ENCODE measurements at regions of chr12 and their contacts with region 1.

Region 1: GRCh38 chr12:6752921-6753771 is at the start of gene MLF2:
- DNase-seq: peak; percentile 99
- H3K4me3 ChIP-seq: peak within 1 kb of the TSS; percentile 84 to 91
- H3K27ac ChIP-seq: peak within 1 kb of the TSS; percentile 97 to 98
- H3K4me1 ChIP-seq: peaks cover 14 to 18% of the 10 kb centered on the region in 2 experiments
- H3K27me3 ChIP-seq: no peaks in the 10 kb centered on the region
- CTCF ChIP-seq: no peak; the same call in 1 of the 2 replicates
- EP300 ChIP-seq: peak in 1 of 2 experiments; percentile 22; a peak in 2 of 4 replicates
- RAD21 ChIP-seq: no peak
- polyA plus RNA-seq, gene MLF2: 535 and 624 TPM in 2 replicates

Region 2: GRCh38 chr12:6507102-6507998 is 245.8 kb before region 1 on chr12:
- CTCF ChIA-PET with region 1: no interaction called
- POLR2A ChIA-PET with region 1: no interaction called
- DNase-seq: no peak
- H3K4me3 ChIP-seq: no peak overlapping the region
- H3K27ac ChIP-seq: peak overlapping the region; percentile 50 to 56
- H3K4me1 ChIP-seq: peaks cover 0 to 10% of the 10 kb centered on the region in 2 experiments; a peak in 2 of 4 replicates
- H3K27me3 ChIP-seq: no peaks in the 10 kb centered on the region
- CTCF ChIP-seq: no peak
- EP300 ChIP-seq: no peak
- RAD21 ChIP-seq: no peak

Region 3: GRCh38 chr12:6563448-6564050 is 189.6 kb before region 1 on chr12:
- CTCF ChIA-PET with region 1: no interaction called
- POLR2A ChIA-PET with region 1: no interaction called
- DNase-seq: peak; percentile 73
- H3K4me3 ChIP-seq: peak overlapping the region in 1 of 2 experiments; percentile 35; a peak in 1 of 4 replicates
- H3K27ac ChIP-seq: no peak overlapping the region
- H3K4me1 ChIP-seq: peaks cover 1 to 5% of the 10 kb centered on the region in 2 experiments; a peak in 2 of 4 replicates
- H3K27me3 ChIP-seq: no peaks in the 10 kb centered on the region
- CTCF ChIP-seq: peak; percentile 91
- EP300 ChIP-seq: no peak
- RAD21 ChIP-seq: peak; percentile 24; the same call in 1 of the 2 replicates

Region 4: DNA sequence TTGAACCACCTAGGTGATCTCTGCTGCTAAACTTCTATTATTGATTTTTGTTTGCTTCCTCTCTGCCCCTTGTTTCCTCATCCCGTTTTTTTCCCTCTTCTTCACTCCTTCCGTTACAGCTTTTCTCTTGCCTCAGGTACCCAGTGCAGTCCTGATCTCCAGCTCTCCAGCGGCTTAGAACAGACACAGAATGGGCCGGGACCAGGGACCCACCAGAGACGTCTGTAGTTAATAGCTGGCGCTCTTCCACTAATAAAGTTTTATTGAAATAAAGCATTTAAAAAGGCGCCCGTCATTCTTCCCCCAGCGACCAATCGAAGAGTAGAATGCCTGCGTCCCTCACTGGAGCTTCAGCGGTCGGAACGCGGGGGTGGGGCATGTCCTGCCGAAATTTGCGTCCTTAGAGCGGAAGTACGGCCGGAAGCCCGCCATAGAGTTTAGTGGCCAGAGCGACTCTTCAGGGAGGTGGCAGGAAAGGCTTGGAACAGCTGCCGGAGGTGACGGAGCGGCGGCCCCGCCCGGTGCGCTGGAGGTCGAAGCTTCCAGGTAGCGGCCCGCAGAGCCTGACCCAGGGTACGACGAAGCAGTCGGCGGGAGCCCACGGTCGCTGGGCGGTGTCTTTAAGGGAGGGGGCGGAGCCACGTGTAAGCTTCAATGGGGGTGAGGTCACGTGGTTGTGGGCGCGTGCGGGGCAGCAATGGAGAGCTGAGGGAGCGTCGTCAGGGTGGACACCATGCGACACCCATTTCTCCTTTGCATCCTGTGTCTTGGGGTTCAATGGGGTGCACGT is 29.3 kb before region 1 on chr12 and contains the start of gene COPS7A:
- CTCF ChIA-PET with region 1: interaction called, 20 read pairs
- POLR2A ChIA-PET with region 1: interaction called, 24 read pairs
- DNase-seq: peak; percentile 96
- H3K4me3 ChIP-seq: peak within 1 kb of the TSS; percentile 57 to 65
- H3K27ac ChIP-seq: peak within 1 kb of the TSS; percentile 84 to 87
- H3K4me1 ChIP-seq: peaks cover 0 to 9% of the 10 kb centered on the region in 2 experiments; a peak in 1 of 4 replicates
- H3K27me3 ChIP-seq: no peaks in the 10 kb centered on the region
- CTCF ChIP-seq: no peak
- EP300 ChIP-seq: no peak
- RAD21 ChIP-seq: no peak
- polyA plus RNA-seq, gene COPS7A: 191 and 231 TPM in 2 replicates

Region 5: GRCh38 chr12:6778574-6779550 is 25.7 kb after region 1 on chr12:
- CTCF ChIA-PET with region 1: interaction called, 343 read pairs
- POLR2A ChIA-PET with region 1: interaction called, 25 read pairs
- DNase-seq: peak; percentile 94
- H3K4me3 ChIP-seq: peak overlapping the region; percentile 10 to 59; a peak in 3 of 4 replicates
- H3K27ac ChIP-seq: peak overlapping the region; percentile 18 to 52; a peak in 3 of 4 replicates
- H3K4me1 ChIP-seq: peaks cover 0 to 8% of the 10 kb centered on the region in 2 experiments; a peak in 1 of 4 replicates
- H3K27me3 ChIP-seq: no peaks in the 10 kb centered on the region
- CTCF ChIP-seq: peak; percentile 91
- EP300 ChIP-seq: peak in 1 of 2 experiments; percentile 45; a peak in 1 of 4 replicates
- RAD21 ChIP-seq: peak; percentile 99

Region 6: DNA sequence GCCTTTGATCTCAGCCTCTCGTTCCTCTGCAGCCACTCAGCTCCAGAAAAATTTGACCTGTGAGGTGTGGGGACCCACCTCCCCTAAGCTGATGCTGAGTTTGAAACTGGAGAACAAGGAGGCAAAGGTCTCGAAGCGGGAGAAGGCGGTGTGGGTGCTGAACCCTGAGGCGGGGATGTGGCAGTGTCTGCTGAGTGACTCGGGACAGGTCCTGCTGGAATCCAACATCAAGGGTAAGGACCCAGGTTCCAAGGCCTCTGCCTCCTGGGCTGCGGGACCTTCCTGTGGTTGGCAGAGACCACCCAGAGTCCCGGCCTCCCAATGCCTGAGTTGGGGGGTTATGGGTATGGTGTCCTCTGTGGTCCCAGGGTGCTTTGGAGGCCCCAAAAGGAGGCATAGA is 64.0 kb after region 1 on chr12:
- CTCF ChIA-PET with region 1: interaction called, 246 read pairs
- POLR2A ChIA-PET with region 1: interaction called, 11 read pairs
- DNase-seq: no peak
- H3K4me3 ChIP-seq: no peak overlapping the region
- H3K27ac ChIP-seq: no peak overlapping the region; a peak in 1 of 4 replicates
- H3K4me1 ChIP-seq: peaks cover 8 to 57% of the 10 kb centered on the region in 2 experiments; a peak in 2 of 4 replicates
- H3K27me3 ChIP-seq: no peaks in the 10 kb centered on the region
- CTCF ChIP-seq: no peak
- EP300 ChIP-seq: no peak
- RAD21 ChIP-seq: no peak

Region 7: DNA sequence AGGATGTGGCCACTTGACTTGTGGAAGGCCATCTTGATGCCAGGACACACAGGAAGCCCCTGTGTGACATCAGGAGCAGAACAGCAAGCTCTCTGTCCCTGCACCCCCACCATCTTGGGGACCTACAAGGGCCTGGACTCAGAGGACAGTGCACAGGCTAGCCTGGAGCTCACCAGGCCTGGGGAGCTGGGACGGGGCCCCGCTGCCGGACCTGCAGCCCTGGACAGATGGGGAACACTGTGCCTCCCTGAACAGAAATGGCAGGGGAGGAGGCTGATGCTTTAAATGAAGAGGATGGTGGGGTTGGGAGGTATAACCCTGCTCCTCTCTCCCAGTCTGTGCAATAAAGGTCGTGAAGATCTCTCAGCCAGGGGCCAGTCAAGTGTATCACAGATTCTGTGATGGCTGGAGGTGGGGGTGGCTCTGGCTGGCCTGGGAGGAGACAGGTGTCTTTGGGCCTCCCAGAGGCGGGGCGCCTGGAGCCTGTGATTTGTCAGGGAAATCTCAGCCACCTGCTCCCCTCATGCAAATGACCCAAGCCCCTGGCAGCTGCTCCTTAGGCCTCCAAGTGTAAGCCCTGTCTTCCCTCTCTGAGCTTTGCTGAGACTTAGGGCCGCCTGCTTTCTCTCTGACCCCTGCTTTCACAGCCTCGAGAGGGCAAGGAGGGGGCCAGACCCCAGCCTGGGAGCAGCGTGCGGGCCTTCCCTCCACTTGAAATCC is 86.5 kb after region 1 on chr12:
- CTCF ChIA-PET with region 1: interaction called, 59 read pairs
- POLR2A ChIA-PET with region 1: interaction called, 3 read pairs
- DNase-seq: no peak
- H3K4me3 ChIP-seq: no peak overlapping the region
- H3K27ac ChIP-seq: no peak overlapping the region
- H3K4me1 ChIP-seq: no peaks in the 10 kb centered on the region
- H3K27me3 ChIP-seq: no peaks in the 10 kb centered on the region
- CTCF ChIP-seq: no peak
- EP300 ChIP-seq: no peak
- RAD21 ChIP-seq: no peak

Region 8: DNA sequence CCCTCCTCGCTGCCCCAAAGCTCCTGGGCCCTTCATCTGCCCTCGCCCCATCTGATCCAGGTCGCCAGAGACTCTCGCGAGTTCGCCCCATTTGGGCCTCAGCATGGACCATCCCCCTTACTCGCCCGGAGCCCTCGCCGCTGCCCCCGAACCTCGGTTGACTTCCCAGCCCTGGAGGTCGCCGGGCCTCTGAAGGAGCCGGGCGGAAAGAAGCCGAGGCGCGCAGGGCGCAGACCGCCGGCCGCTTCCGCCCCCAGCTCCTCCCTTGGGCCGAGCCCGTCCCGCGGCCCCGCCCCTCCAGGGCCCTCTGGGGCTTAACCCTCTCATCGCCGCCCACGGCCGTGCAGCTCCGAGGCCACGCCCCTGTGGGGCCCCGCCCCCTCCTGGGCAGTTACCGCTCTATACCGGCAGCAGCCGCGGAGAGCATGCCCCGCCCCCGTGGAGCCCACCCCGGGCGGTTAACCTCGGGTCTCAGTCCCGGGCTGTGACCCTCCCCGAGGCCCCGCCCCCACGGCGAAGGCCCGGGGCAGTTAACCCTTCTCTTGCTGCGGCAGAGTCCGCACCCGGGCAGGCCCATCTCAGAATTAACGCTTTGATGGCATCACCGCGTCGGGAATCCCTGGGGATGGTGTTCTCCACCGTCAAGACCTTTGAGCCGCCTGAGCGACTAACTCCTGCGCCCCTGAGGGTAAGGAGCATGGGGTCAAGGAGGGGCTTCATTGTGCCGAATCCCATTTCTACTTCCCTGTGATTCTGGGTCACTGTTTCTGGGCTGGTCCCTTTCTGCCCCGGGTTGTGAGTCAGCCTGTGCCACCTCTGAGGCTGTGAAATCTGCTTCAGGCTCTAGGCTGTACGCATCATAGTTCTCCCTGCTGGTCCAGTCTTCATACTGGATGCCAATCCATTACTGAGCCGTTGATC is 120.2 kb after region 1 on chr12 and contains the start of gene SPSB2:
- CTCF ChIA-PET with region 1: interaction called, 23 read pairs
- POLR2A ChIA-PET with region 1: interaction called, 11 read pairs
- DNase-seq: peak; percentile 97
- H3K4me3 ChIP-seq: peak within 1 kb of the TSS; percentile 64 to 91
- H3K27ac ChIP-seq: peak within 1 kb of the TSS; percentile 69 to 84
- H3K4me1 ChIP-seq: peaks cover 30 to 39% of the 10 kb centered on the region in 2 experiments
- H3K27me3 ChIP-seq: no peaks in the 10 kb centered on the region
- CTCF ChIP-seq: no peak
- EP300 ChIP-seq: 0 out of 4 replicates have a peak, but pooled peaks of 1 of the 2 experiments have one; percentile 30
- RAD21 ChIP-seq: no peak
- polyA plus RNA-seq, gene SPSB2: 16.9 and 19.6 TPM in 2 replicates

Measured in SK-N-SH (cell line).